Right lobe of liver (tissue), 6 donors: ENCODE measurements at regions of chr1 and their contacts with region 1.

Region 1: DNA sequence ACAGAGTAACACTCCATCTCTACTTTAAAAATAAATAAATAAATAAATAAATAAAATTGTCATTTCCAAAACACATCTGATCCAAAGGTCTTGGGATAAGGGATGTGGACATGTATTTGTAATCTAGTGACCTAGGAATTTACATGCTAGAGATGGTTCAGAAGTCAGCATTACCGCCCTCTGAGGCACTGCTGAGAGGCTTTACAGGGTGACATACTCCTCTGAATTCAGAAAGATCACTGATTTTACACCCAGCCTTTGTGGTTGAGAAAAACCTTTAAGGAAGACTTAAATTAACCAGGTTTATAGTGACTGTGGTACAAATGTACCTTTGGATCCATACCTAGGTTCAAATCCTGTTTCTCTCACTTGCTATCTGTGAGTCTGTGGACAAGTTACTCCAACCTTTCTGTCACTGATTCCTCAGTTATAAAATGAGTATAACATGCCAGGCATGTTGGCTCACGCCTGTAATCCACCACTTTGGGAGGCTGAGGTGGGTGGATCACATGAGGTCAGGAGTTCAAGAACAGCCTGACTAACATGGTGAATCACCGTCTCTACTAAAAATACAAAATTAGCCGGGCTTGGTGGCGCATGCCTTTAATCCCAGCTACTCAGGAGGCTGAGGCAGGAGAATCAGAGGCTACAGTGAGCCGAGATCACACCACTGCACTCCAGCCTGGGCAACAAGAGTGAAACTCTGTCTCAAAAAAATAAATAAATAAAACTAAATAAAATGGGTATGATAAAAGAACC is 20.1 kb downstream of the OSBPL9 start:
- DNase-seq: no peak
- ATAC-seq: peak in 1 of 4 donors; percentile 79
- H3K4me3 ChIP-seq: no peak overlapping the region
- H3K27ac ChIP-seq: no peak overlapping the region
- H3K4me1 ChIP-seq: peaks cover 0 to 24% (median 6%) of the 10 kb centered on the region in 4 donors
- H3K27me3 ChIP-seq: no peaks in the 10 kb centered on the region
- CTCF ChIP-seq: no peak
- POLR2A ChIP-seq: no peak

Region 2: DNA sequence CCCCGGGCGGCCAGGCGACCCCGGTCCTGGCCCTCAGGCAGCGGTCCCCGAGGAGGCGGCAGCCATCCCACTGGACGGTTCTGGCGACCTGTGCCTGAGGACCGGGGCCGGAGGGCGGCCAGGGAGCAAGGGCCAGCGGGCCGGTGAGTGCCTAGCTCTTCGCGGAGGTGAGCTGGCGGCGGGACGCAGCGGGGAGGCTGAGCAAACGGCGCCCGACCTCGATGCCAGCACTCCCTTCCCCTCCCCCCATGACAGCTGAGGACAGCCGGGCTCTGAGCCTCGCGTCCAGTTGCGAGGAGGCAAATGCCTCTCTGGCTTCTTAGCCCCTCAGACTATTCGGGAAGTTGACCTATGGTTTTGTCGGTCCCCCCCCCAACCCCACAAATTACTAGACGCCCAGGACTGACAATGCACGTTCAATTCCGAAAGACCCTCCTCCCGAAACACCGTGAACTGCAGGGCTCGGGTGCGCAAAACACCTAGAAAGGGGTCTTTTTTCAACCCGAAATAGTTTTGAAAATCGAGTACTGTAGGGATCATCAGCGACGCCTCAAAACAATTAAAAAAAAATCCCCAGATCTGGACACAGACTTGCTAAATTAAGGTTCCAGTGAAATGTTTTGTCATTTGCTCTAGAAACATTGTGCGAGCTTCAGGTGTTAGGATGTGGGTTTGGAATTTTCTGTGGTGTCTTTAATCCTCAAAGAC is 658.6 kb before region 1 on chr1:
- intact Hi-C with region 1: no loop called
- DNase-seq: peak; percentile 84 to 87 (median 86)
- ATAC-seq: peak; percentile 84 to 91 (median 88)
- H3K4me3 ChIP-seq: peak overlapping the region; percentile 80 to 88 (median 81)
- H3K27ac ChIP-seq: peak overlapping the region; percentile 87 to 93 (median 90)
- H3K4me1 ChIP-seq: peaks cover 0 to 12% (median 3%) of the 10 kb centered on the region in 4 donors
- H3K27me3 ChIP-seq: no peaks in the 10 kb centered on the region
- CTCF ChIP-seq: no peak
- POLR2A ChIP-seq: peak; percentile 34

Region 3: GRCh38 chr1:51776408-51776807 is 139.5 kb after region 1 on chr1:
- intact Hi-C with region 1: loop called in 1 of 2 experiments (anchors 10 kb)
- DNase-seq: no peak
- ATAC-seq: no peak
- H3K4me3 ChIP-seq: no peak overlapping the region
- H3K27ac ChIP-seq: no peak overlapping the region
- H3K4me1 ChIP-seq: no peaks in the 10 kb centered on the region
- H3K27me3 ChIP-seq: no peaks in the 10 kb centered on the region
- CTCF ChIP-seq: no peak
- POLR2A ChIP-seq: no peak

Region 4: GRCh38 chr1:52142220-52143155 is 505.5 kb after region 1 on chr1:
- intact Hi-C with region 1: no loop called
- DNase-seq: peak; percentile 64 to 67 (median 65)
- ATAC-seq: peak; percentile 71 to 79 (median 76)
- H3K4me3 ChIP-seq: peak overlapping the region; percentile 74 to 90 (median 85)
- H3K27ac ChIP-seq: peak overlapping the region; percentile 92 to 96 (median 96)
- H3K4me1 ChIP-seq: peaks cover 0 to 11% (median 4%) of the 10 kb centered on the region in 4 donors
- H3K27me3 ChIP-seq: no peaks in the 10 kb centered on the region
- CTCF ChIP-seq: peak in 1 of 4 donors; percentile 11
- POLR2A ChIP-seq: no peak